ENCODE measurements at regions of chr6 and their contacts with region 1.

Region 1: DNA sequence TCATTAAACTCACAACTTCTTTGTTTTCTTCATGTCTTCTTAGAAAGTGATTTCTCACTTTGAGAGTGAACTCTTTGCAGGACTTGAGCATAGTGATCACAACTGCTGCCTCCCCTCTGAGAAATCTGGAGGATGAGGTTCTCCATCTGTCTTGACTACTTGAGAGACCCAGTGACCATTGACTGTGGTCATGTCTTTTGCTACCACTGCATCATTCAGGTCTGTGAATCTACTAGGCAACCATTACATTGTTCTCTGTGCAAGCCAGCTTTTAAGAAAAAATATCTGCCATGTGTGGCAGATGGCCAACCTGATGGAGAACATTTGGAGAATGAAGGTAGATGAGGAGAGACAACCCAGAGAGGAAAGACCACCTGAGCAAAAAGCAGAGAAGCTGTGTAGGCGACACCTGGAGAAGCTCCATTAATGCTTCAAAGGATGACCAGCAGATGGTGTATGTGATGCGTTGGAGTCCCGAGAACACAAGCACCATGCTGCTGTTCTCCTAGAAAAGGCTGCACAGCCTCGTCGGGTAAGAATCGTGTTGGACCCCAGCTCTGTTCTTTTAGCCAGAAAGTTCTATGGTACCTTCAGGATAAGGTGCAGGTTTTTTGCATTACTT is 25.1 kb upstream of the TRIM26 start:
- DNase-seq: no peak
- ATAC-seq: peak; percentile 82
- H3K4me3 ChIP-seq: no peak overlapping the region
- H3K27ac ChIP-seq: no peak overlapping the region
- H3K4me1 ChIP-seq: no peaks in the 10 kb centered on the region
- H3K27me3 ChIP-seq: no peaks in the 10 kb centered on the region; a peak in 1 of 4 replicates
- CTCF ChIP-seq: peak; percentile 52 to 76 (median 60)
- EP300 ChIP-seq: no peak
- POLR2A ChIP-seq: no peak
- RAD21 ChIP-seq: peak; percentile 77

Region 2: GRCh38 chr6:29641430-29642148 is 596.7 kb before region 1 on chr6:
- CTCF ChIA-PET with region 1: no interaction called
- POLR2A ChIA-PET with region 1: no interaction called
- RAD21 ChIA-PET with region 1: no interaction called
- SMC1A ChIA-PET with region 1: no interaction called
- in situ Hi-C with region 1: no loop called
- intact Hi-C with region 1: no loop called
- DNase-seq: no peak
- ATAC-seq: peak; percentile 41; the same call in 2 of the 3 replicates
- H3K4me3 ChIP-seq: no peak overlapping the region
- H3K27ac ChIP-seq: no peak overlapping the region
- H3K4me1 ChIP-seq: no peaks in the 10 kb centered on the region
- H3K27me3 ChIP-seq: no peaks in the 10 kb centered on the region
- CTCF ChIP-seq: no peak
- EP300 ChIP-seq: no peak
- POLR2A ChIP-seq: no peak
- RAD21 ChIP-seq: no peak

Region 3: GRCh38 chr6:30219244-30219643 is 19.0 kb before region 1 on chr6:
- CTCF ChIA-PET with region 1: interaction called, 28 read pairs
- POLR2A ChIA-PET with region 1: no interaction called
- RAD21 ChIA-PET with region 1: interaction called, 17 read pairs
- SMC1A ChIA-PET with region 1: interaction called, 6 read pairs
- in situ Hi-C with region 1: no loop called
- intact Hi-C with region 1: no loop called
- DNase-seq: peak; percentile 23
- ATAC-seq: peak; percentile 75
- H3K4me3 ChIP-seq: no peak overlapping the region
- H3K27ac ChIP-seq: no peak overlapping the region
- H3K4me1 ChIP-seq: peaks cover 4% of the 10 kb centered on the region
- H3K27me3 ChIP-seq: no peaks in the 10 kb centered on the region; a peak in 1 of 4 replicates
- CTCF ChIP-seq: peak; percentile 91 to 94 (median 94)
- EP300 ChIP-seq: no peak
- POLR2A ChIP-seq: 0 out of 2 replicates have a peak, but pooled peaks have one; percentile 31
- RAD21 ChIP-seq: peak; percentile 83

Region 4: GRCh38 chr6:30227763-30228487 is 10.4 kb before region 1 on chr6:
- CTCF ChIA-PET with region 1: interaction called, 30 read pairs
- POLR2A ChIA-PET with region 1: interaction called, 3 read pairs
- RAD21 ChIA-PET with region 1: interaction called, 8 read pairs
- SMC1A ChIA-PET with region 1: interaction called, 24 read pairs
- in situ Hi-C with region 1: no loop called
- intact Hi-C with region 1: no loop called
- DNase-seq: peak; percentile 17
- ATAC-seq: peak; percentile 93
- H3K4me3 ChIP-seq: no peak overlapping the region
- H3K27ac ChIP-seq: no peak overlapping the region
- H3K4me1 ChIP-seq: no peaks in the 10 kb centered on the region
- H3K27me3 ChIP-seq: no peaks in the 10 kb centered on the region
- CTCF ChIP-seq: no peak
- EP300 ChIP-seq: no peak
- POLR2A ChIP-seq: no peak
- RAD21 ChIP-seq: no peak

Region 5: GRCh38 chr6:30259140-30260035 is 21.1 kb after region 1 on chr6:
- CTCF ChIA-PET with region 1: interaction called, 11 read pairs
- POLR2A ChIA-PET with region 1: no interaction called
- RAD21 ChIA-PET with region 1: no interaction called
- SMC1A ChIA-PET with region 1: interaction called, 7 read pairs
- in situ Hi-C with region 1: no loop called
- intact Hi-C with region 1: no loop called
- DNase-seq: peak; percentile 74
- ATAC-seq: peak; percentile 96
- H3K4me3 ChIP-seq: peak overlapping the region; percentile 78
- H3K27ac ChIP-seq: peak overlapping the region; percentile 71
- H3K4me1 ChIP-seq: peaks cover 3% of the 10 kb centered on the region; the same call in 1 of the 2 replicates
- H3K27me3 ChIP-seq: no peaks in the 10 kb centered on the region; a peak in 1 of 4 replicates
- CTCF ChIP-seq: peak; percentile 22 to 38 (median 25); a peak in 4 of 6 replicates
- EP300 ChIP-seq: no peak
- POLR2A ChIP-seq: peak; percentile 75
- RAD21 ChIP-seq: peak; percentile 34

Region 6: GRCh38 chr6:30315156-30315555 is 76.9 kb after region 1 on chr6:
- CTCF ChIA-PET with region 1: interaction called, 10 read pairs
- POLR2A ChIA-PET with region 1: no interaction called
- RAD21 ChIA-PET with region 1: no interaction called
- SMC1A ChIA-PET with region 1: interaction called, 9 read pairs
- in situ Hi-C with region 1: no loop called
- intact Hi-C with region 1: no loop called
- DNase-seq: no peak
- ATAC-seq: no peak
- H3K4me3 ChIP-seq: no peak overlapping the region
- H3K27ac ChIP-seq: no peak overlapping the region
- H3K4me1 ChIP-seq: no peaks in the 10 kb centered on the region
- H3K27me3 ChIP-seq: no peaks in the 10 kb centered on the region
- CTCF ChIP-seq: no peak
- EP300 ChIP-seq: no peak
- POLR2A ChIP-seq: no peak
- RAD21 ChIP-seq: no peak

Region 7: GRCh38 chr6:30357678-30358540 is 119.6 kb after region 1 on chr6:
- CTCF ChIA-PET with region 1: interaction called, 6 read pairs
- POLR2A ChIA-PET with region 1: no interaction called
- RAD21 ChIA-PET with region 1: interaction called, 7 read pairs
- SMC1A ChIA-PET with region 1: interaction called, 13 read pairs
- in situ Hi-C with region 1: no loop called
- intact Hi-C with region 1: no loop called
- DNase-seq: no peak
- ATAC-seq: peak; percentile 94
- H3K4me3 ChIP-seq: no peak overlapping the region
- H3K27ac ChIP-seq: no peak overlapping the region
- H3K4me1 ChIP-seq: no peaks in the 10 kb centered on the region
- H3K27me3 ChIP-seq: peaks cover 2 to 7% of the 10 kb centered on the region in 2 experiments; a peak in 3 of 4 replicates
- CTCF ChIP-seq: peak; percentile 67 to 76 (median 73)
- EP300 ChIP-seq: no peak
- POLR2A ChIP-seq: no peak
- RAD21 ChIP-seq: peak; percentile 63

Region 8: DNA sequence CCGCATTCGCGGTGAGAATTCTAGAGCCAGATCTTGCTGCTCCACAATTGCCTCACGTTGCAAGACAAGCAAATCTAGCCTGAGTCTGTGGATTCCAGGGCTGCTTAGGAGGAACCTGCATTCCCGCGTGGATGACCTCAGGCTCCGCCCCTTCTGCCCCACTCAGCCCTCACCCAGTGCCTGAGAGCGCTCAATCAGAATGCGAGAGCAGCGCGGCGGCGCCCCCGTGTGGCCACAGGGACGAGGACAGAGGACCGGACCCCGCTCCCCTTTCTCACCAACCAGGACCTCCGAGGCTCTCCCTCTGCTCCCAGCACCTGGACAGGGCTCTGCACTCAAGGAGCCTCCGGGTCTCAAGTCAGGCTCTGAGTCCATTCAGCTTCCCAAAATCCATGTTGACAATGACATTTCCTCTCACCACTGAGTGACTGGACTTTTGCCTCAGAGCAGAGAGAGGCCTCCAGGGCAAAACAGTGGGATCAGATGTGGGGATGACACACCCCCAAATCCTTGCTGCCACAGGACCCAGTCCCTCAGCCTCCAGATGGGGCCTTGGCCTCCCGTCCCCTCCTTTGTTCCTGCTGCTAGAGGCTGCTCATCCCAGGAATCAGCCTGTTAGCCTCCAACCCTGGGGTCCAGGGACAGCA is 158.7 kb after region 1 on chr6:
- CTCF ChIA-PET with region 1: interaction called, 53 read pairs
- POLR2A ChIA-PET with region 1: no interaction called
- RAD21 ChIA-PET with region 1: interaction called, 10 read pairs
- SMC1A ChIA-PET with region 1: interaction called, 9 read pairs
- in situ Hi-C with region 1: loop called (anchors 5 kb)
- intact Hi-C with region 1: loop called (anchors 1 kb)
- DNase-seq: peak; percentile 9
- ATAC-seq: peak; percentile 100
- H3K4me3 ChIP-seq: no peak overlapping the region
- H3K27ac ChIP-seq: no peak overlapping the region
- H3K4me1 ChIP-seq: no peaks in the 10 kb centered on the region
- H3K27me3 ChIP-seq: peaks cover 0 to 3% of the 10 kb centered on the region in 2 experiments; a peak in 3 of 4 replicates
- CTCF ChIP-seq: peak; percentile 87 to 90 (median 89)
- EP300 ChIP-seq: no peak
- POLR2A ChIP-seq: no peak
- RAD21 ChIP-seq: peak; percentile 88

Region 9: DNA sequence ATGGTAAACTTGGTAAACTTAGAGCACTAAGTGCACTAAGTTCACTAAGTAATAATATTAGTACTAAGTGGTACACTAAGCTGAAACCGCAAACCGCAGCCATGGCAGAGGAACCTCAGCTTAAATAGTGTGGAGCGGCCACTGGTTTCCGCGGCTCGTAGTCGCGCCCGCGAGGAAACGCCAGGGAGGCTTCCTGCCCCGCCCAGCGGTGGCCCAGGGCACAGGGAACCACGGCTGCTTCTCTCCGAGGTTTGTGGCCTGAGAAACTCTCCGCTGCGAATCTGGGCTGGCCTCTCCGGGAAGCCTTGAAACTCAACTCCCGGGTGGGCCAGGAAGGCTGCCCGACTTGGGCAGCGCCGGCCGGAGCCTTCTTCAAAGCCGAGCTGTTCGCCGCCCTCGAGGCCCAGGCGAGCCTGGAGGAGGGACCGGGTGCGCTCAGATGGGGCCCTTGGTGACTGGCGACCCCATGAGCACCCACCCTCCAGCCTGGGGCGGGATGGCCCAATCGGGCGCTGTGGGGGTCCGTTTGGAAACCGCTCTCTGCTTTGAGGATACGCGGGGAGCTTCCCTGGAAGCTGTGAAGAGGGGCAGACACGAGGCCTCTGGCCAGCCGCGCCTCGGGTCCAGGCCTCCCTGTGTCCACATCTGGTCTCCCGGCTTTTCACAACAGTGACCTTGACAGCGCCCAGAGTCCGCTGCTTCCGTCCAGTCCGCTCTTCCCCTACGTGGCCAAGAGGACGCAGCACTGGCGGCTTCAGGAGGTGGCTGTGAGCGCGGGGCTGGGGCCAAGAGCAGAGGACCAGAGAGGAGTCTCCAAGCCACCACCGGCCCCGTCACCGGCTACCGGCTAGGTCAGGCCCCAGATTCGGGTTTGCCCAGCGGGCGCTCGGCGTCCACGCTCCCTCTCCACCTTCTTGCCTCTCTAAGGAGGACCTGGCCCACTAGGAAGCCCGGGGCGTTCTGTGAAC is 225.7 kb after region 1 on chr6:
- CTCF ChIA-PET with region 1: no interaction called
- POLR2A ChIA-PET with region 1: no interaction called
- RAD21 ChIA-PET with region 1: no interaction called
- SMC1A ChIA-PET with region 1: no interaction called
- in situ Hi-C with region 1: no loop called
- intact Hi-C with region 1: no loop called
- DNase-seq: peak; percentile 15
- ATAC-seq: peak; percentile 77
- H3K4me3 ChIP-seq: no peak overlapping the region
- H3K27ac ChIP-seq: no peak overlapping the region
- H3K4me1 ChIP-seq: peaks cover 5% of the 10 kb centered on the region; the same call in 1 of the 2 replicates
- H3K27me3 ChIP-seq: peaks cover 22 to 39% of the 10 kb centered on the region in 2 experiments
- CTCF ChIP-seq: no peak
- EP300 ChIP-seq: peak in 1 of 2 experiments; percentile 21; a peak in 1 of 4 replicates
- POLR2A ChIP-seq: no peak
- RAD21 ChIP-seq: no peak

Region 10: DNA sequence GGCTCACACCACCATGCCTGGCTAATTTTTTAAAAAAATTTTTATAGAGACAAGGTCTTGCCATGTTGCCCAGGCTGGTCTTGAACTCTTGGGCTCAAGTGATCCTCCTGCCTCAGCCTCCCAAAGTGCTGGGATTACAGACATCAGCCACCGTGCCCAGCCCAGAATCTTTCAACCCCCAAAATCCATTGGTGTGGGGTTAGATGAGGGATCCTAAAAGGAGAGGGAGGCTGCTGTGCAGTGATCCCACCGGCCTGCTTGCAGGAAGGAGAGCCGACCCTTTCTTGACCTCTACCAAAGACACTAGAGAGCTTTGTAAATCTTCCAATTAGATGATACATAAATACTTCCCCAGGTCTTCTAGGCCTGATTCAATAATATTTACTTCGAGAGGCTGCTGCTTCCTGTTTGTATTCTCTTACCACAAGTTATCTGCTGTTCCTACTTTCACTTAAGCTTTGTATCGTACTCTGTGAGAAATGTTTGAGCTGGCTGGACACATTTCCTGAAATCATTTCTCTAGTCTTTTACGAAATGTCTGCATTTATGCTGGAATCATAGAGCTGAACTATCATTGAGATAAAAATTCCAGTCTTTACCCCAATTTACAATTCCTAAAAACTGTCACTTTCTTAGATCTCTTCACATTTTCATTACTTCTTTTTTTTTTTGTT is 555.4 kb after region 1 on chr6:
- CTCF ChIA-PET with region 1: no interaction called
- POLR2A ChIA-PET with region 1: no interaction called
- RAD21 ChIA-PET with region 1: no interaction called
- SMC1A ChIA-PET with region 1: no interaction called
- in situ Hi-C with region 1: no loop called
- intact Hi-C with region 1: no loop called
- DNase-seq: peak; percentile 57
- ATAC-seq: peak; percentile 97
- H3K4me3 ChIP-seq: no peak overlapping the region
- H3K27ac ChIP-seq: peak overlapping the region; percentile 84
- H3K4me1 ChIP-seq: peaks cover 16% of the 10 kb centered on the region
- H3K27me3 ChIP-seq: no peaks in the 10 kb centered on the region
- CTCF ChIP-seq: no peak
- EP300 ChIP-seq: 0 out of 4 replicates have a peak, but pooled peaks of 1 of the 2 experiments have one; percentile 36
- POLR2A ChIP-seq: no peak
- RAD21 ChIP-seq: no peak